ENCODE measurements at regions of chr9 and their contacts with region 1.

Region 1: DNA sequence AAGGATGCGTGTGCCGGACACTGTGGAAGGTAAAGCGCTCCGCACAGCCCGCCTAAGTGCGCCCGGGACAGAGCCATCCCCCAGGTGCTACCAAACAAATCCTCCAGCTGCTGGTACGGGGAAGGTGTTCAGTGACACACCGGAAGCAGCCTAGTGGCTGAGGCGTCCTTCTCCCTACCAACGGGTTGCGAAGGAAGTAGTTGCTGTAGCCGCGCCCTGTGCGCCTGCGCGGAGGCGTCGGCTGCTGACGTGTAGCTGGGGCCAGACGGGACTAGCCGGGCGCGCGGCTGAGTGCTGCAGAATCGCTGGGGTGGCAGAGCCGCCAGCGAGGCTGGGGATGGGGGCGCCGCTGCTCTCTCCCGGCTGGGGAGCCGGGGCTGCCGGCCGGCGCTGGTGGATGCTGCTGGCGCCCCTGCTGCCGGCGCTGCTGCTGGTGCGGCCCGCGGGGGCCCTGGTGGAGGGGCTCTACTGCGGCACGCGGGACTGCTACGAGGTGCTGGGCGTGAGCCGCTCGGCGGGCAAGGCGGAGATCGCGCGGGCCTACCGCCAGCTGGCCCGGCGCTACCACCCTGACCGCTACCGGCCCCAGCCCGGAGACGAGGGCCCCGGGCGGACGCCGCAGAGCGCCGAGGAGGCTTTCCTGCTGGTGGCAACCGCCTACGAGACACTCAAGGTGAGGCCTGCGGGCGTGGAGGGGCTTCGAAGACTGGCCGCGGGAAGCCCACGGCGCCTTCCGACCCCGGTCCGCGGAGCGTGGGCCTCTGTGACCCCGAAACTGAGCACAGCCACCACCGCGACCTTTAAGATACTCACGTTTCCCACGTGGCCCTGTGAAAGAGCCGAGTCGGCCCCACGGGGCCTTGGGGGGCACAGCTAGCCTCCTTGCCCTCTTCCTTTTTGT is at the start of gene DNAJC25:
- DNase-seq: peak; percentile 98
- ATAC-seq: peak; percentile 87
- H3K4me3 ChIP-seq: peak within 1 kb of the TSS; percentile 65 to 92 (median 85)
- H3K4me3 Mint-ChIP-seq: peak within 1 kb of the TSS; percentile 98
- H3K27ac ChIP-seq: peak within 1 kb of the TSS; percentile 64 to 84
- H3K27ac Mint-ChIP-seq: peak within 1 kb of the TSS; percentile 93
- H3K4me1 ChIP-seq: peaks cover 15 to 17% of the 10 kb centered on the region in 2 donors
- H3K4me1 Mint-ChIP-seq: peaks cover 39% of the 10 kb centered on the region
- H3K27me3 ChIP-seq: no peaks in the 10 kb centered on the region
- H3K27me3 Mint-ChIP-seq: no peaks in the 10 kb centered on the region
- CTCF ChIP-seq: no peak
- total RNA-seq, gene DNAJC25: 3.8 and 4.1 TPM in 2 replicates

Region 2: DNA sequence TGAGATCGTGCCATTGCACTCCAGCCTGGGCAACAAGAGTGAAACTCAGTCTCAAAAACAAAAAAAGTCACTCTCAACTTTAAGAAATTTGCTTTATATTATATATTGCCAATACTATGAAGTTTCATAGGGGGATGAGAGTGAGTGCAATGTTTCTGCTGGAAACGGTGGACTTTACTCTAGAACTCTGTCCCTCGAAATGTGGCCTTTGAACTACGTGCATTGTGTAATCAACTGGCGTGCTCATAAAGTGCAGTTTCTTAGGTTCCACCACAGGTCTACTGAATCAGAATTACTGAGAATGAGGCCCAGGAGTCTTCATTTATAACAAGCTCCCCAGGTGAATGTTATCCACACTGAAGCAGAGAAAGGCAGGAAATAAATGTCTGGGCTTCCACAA is 325.4 kb before region 1 on chr9:
- CTCF ChIA-PET with region 1: no interaction called
- POLR2A ChIA-PET with region 1: no interaction called
- intact Hi-C with region 1: no loop called
- DNase-seq: no peak
- ATAC-seq: no peak
- H3K4me3 ChIP-seq: no peak overlapping the region
- H3K4me3 Mint-ChIP-seq: no peak overlapping the region
- H3K27ac ChIP-seq: no peak overlapping the region
- H3K27ac Mint-ChIP-seq: no peak overlapping the region
- H3K4me1 ChIP-seq: no peaks in the 10 kb centered on the region
- H3K4me1 Mint-ChIP-seq: no peaks in the 10 kb centered on the region
- H3K27me3 ChIP-seq: no peaks in the 10 kb centered on the region
- H3K27me3 Mint-ChIP-seq: no peaks in the 10 kb centered on the region
- CTCF ChIP-seq: no peak

Region 3: DNA sequence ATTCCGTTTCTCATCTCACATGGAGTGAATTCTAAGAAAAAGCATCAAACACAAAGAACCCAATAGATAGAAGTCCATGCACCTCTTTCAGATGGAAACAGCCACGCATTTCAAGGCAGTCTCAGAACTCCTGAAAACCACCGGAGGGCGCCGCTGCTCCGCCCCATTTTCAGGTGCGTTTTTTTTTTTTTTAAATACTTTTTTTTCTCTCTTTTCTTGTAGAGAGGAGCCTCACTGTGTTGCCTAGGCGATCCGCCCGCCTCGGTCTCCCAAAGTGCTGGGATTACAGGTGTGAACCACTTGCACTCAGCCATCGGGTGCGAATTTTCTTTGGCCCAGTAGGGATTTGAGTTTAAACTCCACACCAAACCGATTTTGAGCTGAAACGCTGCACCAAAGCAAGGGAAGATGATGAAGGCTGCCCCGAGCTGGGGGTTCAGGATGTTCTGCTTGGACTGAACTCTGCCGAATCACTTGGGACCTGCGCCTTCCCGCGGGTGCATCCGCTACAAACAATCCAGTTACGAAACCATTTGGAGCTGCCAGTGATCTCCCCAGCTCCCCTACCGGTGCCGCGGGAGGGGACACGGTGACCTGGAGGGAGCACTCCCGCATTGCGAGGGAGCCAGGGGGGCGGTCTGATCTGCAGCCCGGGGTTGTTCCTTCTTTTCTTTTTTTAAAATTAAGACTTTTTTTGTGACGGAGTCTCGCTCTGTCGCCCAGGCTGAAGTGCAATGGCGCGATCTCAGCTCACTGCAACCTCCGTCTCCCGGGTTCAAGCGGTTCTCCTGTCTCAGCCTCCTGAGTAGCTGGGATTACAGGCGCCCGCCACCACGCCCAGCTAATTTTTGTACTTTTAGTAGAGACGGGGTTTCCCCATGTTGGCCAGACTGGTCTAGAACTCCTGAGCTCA is 33.2 kb before region 1 on chr9:
- CTCF ChIA-PET with region 1: interaction called, 4 read pairs
- POLR2A ChIA-PET with region 1: no interaction called
- intact Hi-C with region 1: loop called (anchors 1 kb)
- DNase-seq: peak; percentile 75
- ATAC-seq: peak; percentile 69
- H3K4me3 ChIP-seq: peak overlapping the region; percentile 39 to 76 (median 59)
- H3K4me3 Mint-ChIP-seq: peak overlapping the region; percentile 87
- H3K27ac ChIP-seq: no peak overlapping the region
- H3K27ac Mint-ChIP-seq: peak overlapping the region; percentile 59
- H3K4me1 ChIP-seq: peaks cover 22 to 23% of the 10 kb centered on the region in 2 donors
- H3K4me1 Mint-ChIP-seq: peaks cover 25% of the 10 kb centered on the region
- H3K27me3 ChIP-seq: peaks cover 0 to 39% (median 20%) of the 10 kb centered on the region in 4 experiments
- H3K27me3 Mint-ChIP-seq: peaks cover 42% of the 10 kb centered on the region
- CTCF ChIP-seq: peak; percentile 76

Region 4: DNA sequence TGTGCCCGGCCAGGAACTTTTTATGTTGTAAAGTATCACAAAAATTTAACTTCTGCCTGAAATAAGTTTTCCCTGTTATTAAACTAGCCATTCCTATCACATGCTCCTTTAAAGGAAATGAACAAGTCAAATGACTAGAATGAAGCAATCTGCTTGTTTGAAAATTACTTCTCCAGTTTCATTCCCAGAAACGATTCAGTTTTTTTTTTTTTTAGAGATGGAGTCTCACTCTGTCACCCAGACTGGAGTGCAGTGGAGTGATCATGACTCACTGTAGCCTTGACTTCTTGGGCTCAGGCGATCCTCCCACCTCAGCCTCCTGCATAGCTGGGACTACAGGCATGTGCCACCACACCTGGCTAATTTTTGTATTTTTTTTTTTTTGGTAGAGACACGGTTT is 16.7 kb after region 1 on chr9:
- CTCF ChIA-PET with region 1: no interaction called
- POLR2A ChIA-PET with region 1: no interaction called
- intact Hi-C with region 1: no loop called
- DNase-seq: no peak
- ATAC-seq: no peak
- H3K4me3 ChIP-seq: no peak overlapping the region
- H3K4me3 Mint-ChIP-seq: no peak overlapping the region
- H3K27ac ChIP-seq: no peak overlapping the region
- H3K27ac Mint-ChIP-seq: no peak overlapping the region
- H3K4me1 ChIP-seq: no peaks in the 10 kb centered on the region
- H3K4me1 Mint-ChIP-seq: no peaks in the 10 kb centered on the region
- H3K27me3 ChIP-seq: no peaks in the 10 kb centered on the region
- H3K27me3 Mint-ChIP-seq: no peaks in the 10 kb centered on the region
- CTCF ChIP-seq: no peak

Region 5: GRCh38 chr9:111661150-111661801 is 30.0 kb after region 1 on chr9 and contains the start of gene GNG10:
- CTCF ChIA-PET with region 1: no interaction called
- POLR2A ChIA-PET with region 1: interaction called, 6 read pairs
- intact Hi-C with region 1: loop called (anchors 1 kb)
- DNase-seq: peak; percentile 75
- ATAC-seq: peak; percentile 94
- H3K4me3 ChIP-seq: peak within 1 kb of the TSS; percentile 61 to 92 (median 74)
- H3K4me3 Mint-ChIP-seq: peak within 1 kb of the TSS; percentile 99
- H3K27ac ChIP-seq: peak within 1 kb of the TSS; percentile 37 to 51
- H3K27ac Mint-ChIP-seq: peak within 1 kb of the TSS; percentile 91
- H3K4me1 ChIP-seq: peaks cover 11 to 20% of the 10 kb centered on the region in 2 donors
- H3K4me1 Mint-ChIP-seq: peaks cover 29% of the 10 kb centered on the region
- H3K27me3 ChIP-seq: no peaks in the 10 kb centered on the region
- H3K27me3 Mint-ChIP-seq: no peaks in the 10 kb centered on the region
- CTCF ChIP-seq: no peak
- total RNA-seq, gene GNG10: 5.2 and 7.2 TPM in 2 replicates

Region 6: DNA sequence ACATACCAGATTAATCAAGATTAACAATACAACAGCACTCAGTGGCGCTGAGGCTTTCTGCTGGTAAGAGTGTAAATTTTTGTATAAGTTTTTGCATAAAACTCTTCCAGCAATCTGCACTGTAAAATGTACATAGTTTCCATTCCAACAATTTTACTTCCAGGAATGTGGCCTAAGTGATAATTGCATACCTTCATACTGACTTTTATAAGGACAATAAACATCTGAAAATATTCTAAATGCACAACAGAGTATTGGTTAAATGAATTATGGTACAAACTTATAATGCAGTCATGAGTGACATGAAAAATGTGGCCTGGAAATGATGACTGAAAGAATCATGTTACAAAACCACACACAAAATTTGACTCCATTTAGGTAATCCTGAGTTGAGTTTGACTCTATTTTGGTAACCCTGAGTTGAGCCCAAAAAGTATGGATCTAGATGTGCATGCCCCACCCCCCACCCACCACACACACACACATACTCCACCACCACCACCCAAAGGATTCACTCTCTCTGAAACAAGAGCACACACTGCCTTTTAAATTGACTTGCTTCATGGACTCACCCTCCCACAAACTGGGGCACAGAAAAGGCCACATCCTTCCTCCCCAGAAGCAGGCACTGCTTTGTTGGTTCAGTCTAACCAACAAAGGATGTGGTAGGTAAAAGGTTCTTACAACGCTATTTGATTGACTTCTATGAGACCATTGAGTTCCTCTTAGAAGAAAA is 406.1 kb after region 1 on chr9:
- CTCF ChIA-PET with region 1: no interaction called
- POLR2A ChIA-PET with region 1: no interaction called
- intact Hi-C with region 1: loop called (anchors 1 kb)
- DNase-seq: peak; percentile 84
- ATAC-seq: peak; percentile 68
- H3K4me3 ChIP-seq: peak overlapping the region in 1 of 5 experiments; percentile 18
- H3K4me3 Mint-ChIP-seq: peak overlapping the region; percentile 81
- H3K27ac ChIP-seq: peak overlapping the region; percentile 56 to 72
- H3K27ac Mint-ChIP-seq: peak overlapping the region; percentile 95
- H3K4me1 ChIP-seq: peaks cover 75 to 77% of the 10 kb centered on the region in 2 donors
- H3K4me1 Mint-ChIP-seq: peaks cover 72% of the 10 kb centered on the region
- H3K27me3 ChIP-seq: no peaks in the 10 kb centered on the region
- H3K27me3 Mint-ChIP-seq: no peaks in the 10 kb centered on the region
- CTCF ChIP-seq: no peak

Region 7: GRCh38 chr9:113150670-113151611 is 1519.6 kb after region 1 on chr9 and contains the start of gene SLC31A2:
- CTCF ChIA-PET with region 1: no interaction called
- POLR2A ChIA-PET with region 1: no interaction called
- intact Hi-C with region 1: loop called (anchors 2 kb)
- DNase-seq: peak; percentile 85
- ATAC-seq: peak; percentile 93
- H3K4me3 ChIP-seq: peak within 1 kb of the TSS; percentile 73 to 83 (median 76)
- H3K4me3 Mint-ChIP-seq: peak within 1 kb of the TSS; percentile 88
- H3K27ac ChIP-seq: peak within 1 kb of the TSS in 1 of 2 donors; percentile 25
- H3K27ac Mint-ChIP-seq: peak within 1 kb of the TSS; percentile 50
- H3K4me1 ChIP-seq: peaks cover 0 to 19% of the 10 kb centered on the region in 2 donors
- H3K4me1 Mint-ChIP-seq: peaks cover 11% of the 10 kb centered on the region
- H3K27me3 ChIP-seq: no peaks in the 10 kb centered on the region
- H3K27me3 Mint-ChIP-seq: peaks cover 2% of the 10 kb centered on the region
- CTCF ChIP-seq: peak; percentile 56
- total RNA-seq, gene SLC31A2: 2.3 and 3.0 TPM in 2 replicates